ENCODE measurements at regions of chr2 and their contacts with region 1.

Region 1: DNA sequence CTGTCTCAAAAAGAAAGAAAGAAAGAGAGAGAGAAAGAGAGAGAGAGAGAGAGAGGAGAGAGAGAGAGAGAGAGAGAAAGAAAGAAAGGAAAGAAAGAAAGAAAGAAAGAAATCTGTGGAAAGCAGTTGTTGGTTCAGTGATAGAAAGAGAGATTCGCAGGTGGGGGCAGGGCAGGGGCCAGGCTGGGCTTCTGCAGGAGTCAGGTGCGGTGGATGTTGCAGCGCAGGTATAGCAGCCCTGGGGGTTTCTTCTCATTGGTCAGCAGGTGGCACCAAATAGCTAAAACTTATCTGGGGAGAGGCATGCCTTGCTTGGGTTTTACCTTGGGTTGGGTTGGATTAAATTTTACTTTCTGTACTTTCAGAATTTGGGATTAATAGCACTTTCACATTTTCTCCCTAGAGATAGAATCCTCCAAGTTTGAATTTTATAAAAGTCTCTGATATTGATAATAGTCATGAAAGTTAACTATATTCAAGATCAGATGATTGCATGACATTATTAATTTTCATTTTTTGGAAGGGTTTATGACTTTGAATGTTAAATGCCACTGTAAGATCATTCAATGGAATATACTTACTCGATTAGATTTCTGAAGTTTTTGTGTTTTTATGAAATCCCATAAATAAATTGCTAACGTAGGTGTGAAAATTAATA is 66.6 kb downstream of the SPTBN1 start:
- DNase-seq: peak; percentile 60
- H3K4me3 ChIP-seq: no peak overlapping the region
- H3K27ac ChIP-seq: no peak overlapping the region
- H3K4me1 ChIP-seq: peaks cover 3 to 34% of the 10 kb centered on the region in 2 experiments; a peak in 3 of 4 replicates
- H3K27me3 ChIP-seq: no peaks in the 10 kb centered on the region
- CTCF ChIP-seq: peak; percentile 68
- EP300 ChIP-seq: no peak
- RAD21 ChIP-seq: peak; percentile 79

Region 2: DNA sequence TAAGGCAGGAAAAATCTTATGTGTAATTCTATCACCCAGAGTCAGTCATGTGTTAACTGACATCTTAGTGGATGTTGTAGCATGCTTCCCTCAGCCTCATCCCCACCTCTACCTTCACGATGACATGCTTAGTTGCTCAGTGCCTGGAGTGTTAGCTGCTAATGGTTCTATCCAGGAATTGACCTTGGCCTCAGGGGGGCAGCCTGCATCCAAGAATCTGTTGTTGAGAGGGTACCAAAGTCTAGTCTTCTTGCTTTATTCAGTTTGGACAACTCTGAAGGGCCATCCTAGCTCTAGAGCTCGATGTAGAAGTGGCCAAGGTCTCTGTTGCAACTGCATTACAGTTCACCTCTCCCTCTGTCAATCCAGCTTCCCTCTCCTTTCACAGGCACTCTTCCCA is 346.2 kb before region 1 on chr2:
- CTCF ChIA-PET with region 1: interaction called, 10 read pairs
- POLR2A ChIA-PET with region 1: no interaction called
- DNase-seq: peak; percentile 38
- H3K4me3 ChIP-seq: no peak overlapping the region
- H3K27ac ChIP-seq: no peak overlapping the region
- H3K4me1 ChIP-seq: no peaks in the 10 kb centered on the region
- H3K27me3 ChIP-seq: no peaks in the 10 kb centered on the region
- CTCF ChIP-seq: peak; percentile 63
- EP300 ChIP-seq: no peak
- RAD21 ChIP-seq: peak; percentile 80

Region 3: DNA sequence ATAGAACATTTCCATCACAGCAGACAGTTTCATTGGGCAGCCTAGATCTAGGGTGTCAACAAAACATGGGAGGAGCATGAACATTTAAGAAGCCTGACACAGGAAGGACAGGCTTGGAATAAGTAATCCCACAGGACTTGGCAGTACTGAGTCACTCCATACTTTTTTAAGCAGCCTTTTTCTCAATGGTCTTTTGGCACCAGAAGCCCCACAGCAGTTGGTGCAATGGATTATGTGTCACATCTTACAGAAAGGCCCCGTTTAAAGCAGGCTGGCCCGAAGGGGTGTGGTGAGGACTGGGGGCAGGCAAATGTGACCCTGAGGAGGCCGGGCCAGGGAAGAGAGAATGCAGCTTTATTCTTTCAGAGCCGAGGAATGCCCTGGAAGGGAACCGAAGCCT is 40.0 kb before region 1 on chr2:
- CTCF ChIA-PET with region 1: no interaction called
- POLR2A ChIA-PET with region 1: no interaction called
- DNase-seq: no peak
- H3K4me3 ChIP-seq: no peak overlapping the region
- H3K27ac ChIP-seq: peak overlapping the region in 1 of 2 experiments; percentile 59; a peak in 3 of 4 replicates
- H3K4me1 ChIP-seq: peaks cover 8 to 21% of the 10 kb centered on the region in 2 experiments
- H3K27me3 ChIP-seq: no peaks in the 10 kb centered on the region
- CTCF ChIP-seq: no peak
- EP300 ChIP-seq: no peak
- RAD21 ChIP-seq: no peak